Activated T-helper 2 cell treated with anti-CD3 and anti-CD28 coated beads, Interferon-gamma antibody, Interleukin-2, Interleukin-4, amounts not matched to agents 10 μg/mL and 5 μg/mL and 100 μg/mL, durations not matched to agents 14 hours and 24 hours and 36 hours (primary cell): ENCODE measurements at regions of chr2 and their contacts with region 1.

Region 1: GRCh38 chr2:159921752-159922404 is 123.9 kb upstream of the CD302 start:
- DNase-seq: peak; percentile 53
- H3K4me3 Mint-ChIP-seq: no peak overlapping the region
- H3K27ac Mint-ChIP-seq: peak overlapping the region; percentile 16
- H3K4me1 Mint-ChIP-seq: peaks cover 29% of the 10 kb centered on the region
- H3K27me3 Mint-ChIP-seq: peaks cover 10% of the 10 kb centered on the region

Region 2: GRCh38 chr2:159807183-159808031 is 114.5 kb before region 1 on chr2:
- intact Hi-C with region 1: loop called (anchors 5 kb)
- DNase-seq: no peak
- H3K4me3 Mint-ChIP-seq: no peak overlapping the region
- H3K27ac Mint-ChIP-seq: no peak overlapping the region
- H3K4me1 Mint-ChIP-seq: no peaks in the 10 kb centered on the region
- H3K27me3 Mint-ChIP-seq: no peaks in the 10 kb centered on the region

Region 3: DNA sequence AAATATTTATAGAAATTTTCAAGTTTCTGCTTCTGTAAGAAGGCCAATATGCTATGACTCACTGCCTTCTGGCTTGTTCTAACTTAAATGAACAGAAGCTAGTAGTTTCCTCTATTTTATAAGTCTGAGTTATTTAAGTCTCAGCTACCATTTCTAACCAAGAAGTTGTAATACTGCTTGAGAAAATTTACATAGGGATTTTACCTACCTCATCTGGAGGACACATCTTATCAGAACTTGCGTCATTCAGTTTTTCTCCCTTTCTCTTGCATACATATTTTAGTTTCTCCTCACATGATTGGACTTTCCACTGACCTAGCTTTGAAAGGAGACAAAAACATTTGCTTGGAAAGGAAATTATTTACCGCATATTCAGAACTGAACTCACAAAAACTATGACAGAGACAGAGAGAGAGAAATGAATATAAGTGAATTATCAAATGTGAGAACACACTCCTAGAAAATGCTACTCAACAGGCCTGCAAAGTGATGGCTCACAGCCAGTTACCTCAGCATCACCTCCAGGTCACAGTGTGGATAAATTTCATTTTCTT is 42.8 kb before region 1 on chr2:
- intact Hi-C with region 1: loop called (anchors 1 kb)
- DNase-seq: no peak
- H3K4me3 Mint-ChIP-seq: peak overlapping the region; percentile 32
- H3K27ac Mint-ChIP-seq: peak overlapping the region; percentile 86
- H3K4me1 Mint-ChIP-seq: peaks cover 35% of the 10 kb centered on the region
- H3K27me3 Mint-ChIP-seq: no peaks in the 10 kb centered on the region

Region 4: GRCh38 chr2:159895258-159896065 is 26.4 kb before region 1 on chr2:
- intact Hi-C with region 1: loop called (anchors 2 kb)
- DNase-seq: no peak
- H3K4me3 Mint-ChIP-seq: no peak overlapping the region
- H3K27ac Mint-ChIP-seq: peak overlapping the region; percentile 84
- H3K4me1 Mint-ChIP-seq: peaks cover 64% of the 10 kb centered on the region
- H3K27me3 Mint-ChIP-seq: no peaks in the 10 kb centered on the region

Region 5: GRCh38 chr2:159904127-159904958 is 17.5 kb before region 1 on chr2:
- intact Hi-C with region 1: loop called (anchors 1 kb)
- DNase-seq: peak; percentile 71
- H3K4me3 Mint-ChIP-seq: peak within 1 kb of the TSS; percentile 94
- H3K27ac Mint-ChIP-seq: peak within 1 kb of the TSS; percentile 93
- H3K4me1 Mint-ChIP-seq: peaks cover 61% of the 10 kb centered on the region
- H3K27me3 Mint-ChIP-seq: no peaks in the 10 kb centered on the region

Region 6: GRCh38 chr2:159910951-159911350 is 10.9 kb before region 1 on chr2:
- intact Hi-C with region 1: loop called (anchors 1 kb)
- DNase-seq: no peak
- H3K4me3 Mint-ChIP-seq: no peak overlapping the region
- H3K27ac Mint-ChIP-seq: peak overlapping the region; percentile 53
- H3K4me1 Mint-ChIP-seq: peaks cover 51% of the 10 kb centered on the region
- H3K27me3 Mint-ChIP-seq: no peaks in the 10 kb centered on the region

Region 7: GRCh38 chr2:160028431-160029269 is 106.8 kb after region 1 on chr2:
- intact Hi-C with region 1: no loop called
- DNase-seq: no peak
- H3K4me3 Mint-ChIP-seq: no peak overlapping the region
- H3K27ac Mint-ChIP-seq: no peak overlapping the region
- H3K4me1 Mint-ChIP-seq: no peaks in the 10 kb centered on the region
- H3K27me3 Mint-ChIP-seq: peaks cover 8% of the 10 kb centered on the region